ENCODE measurements at regions of chr5 and their contacts with region 1.

Region 1: DNA sequence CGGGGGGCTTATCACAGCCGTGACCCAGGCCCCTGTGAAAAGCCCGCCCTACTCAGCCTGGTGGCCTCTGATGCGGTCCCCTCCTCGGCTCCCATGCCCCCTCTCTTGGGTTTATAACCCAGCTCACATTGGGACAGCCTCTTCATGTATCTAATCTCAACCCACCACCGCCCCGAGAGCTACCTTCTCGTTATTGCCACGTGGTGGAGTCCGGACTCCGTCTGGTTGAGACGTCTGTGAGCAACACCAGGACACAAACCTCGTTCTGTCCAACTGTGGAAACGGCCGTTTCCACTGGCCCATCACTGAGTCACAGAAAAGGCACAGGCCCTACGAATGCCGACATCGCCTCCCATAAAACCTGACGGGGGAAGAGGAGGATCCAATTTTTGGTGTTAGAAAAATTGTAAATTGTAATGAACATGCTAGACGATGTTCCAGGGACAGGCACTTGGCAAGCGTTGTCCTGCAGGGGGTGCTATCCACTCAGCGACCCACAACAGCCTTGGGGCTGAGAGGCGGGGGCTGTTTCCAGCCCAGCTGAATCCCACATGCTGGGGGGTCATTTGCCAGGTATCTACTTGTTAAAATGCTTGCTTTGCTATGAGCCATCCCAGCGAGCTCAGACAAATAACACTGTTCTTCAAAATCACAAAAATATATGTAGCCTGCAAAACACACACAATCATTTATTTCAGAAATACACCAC is 37.3 kb upstream of the N4BP3 start:
- DNase-seq: peak; percentile 61 to 81
- ATAC-seq: peak; percentile 84 to 94 (median 86)
- H3K4me3 ChIP-seq: no peak overlapping the region
- H3K27ac ChIP-seq: no peak overlapping the region
- H3K4me1 ChIP-seq: no peaks in the 10 kb centered on the region
- H3K27me3 ChIP-seq: peaks cover 0 to 26% (median 0%) of the 10 kb centered on the region in 3 donors
- CTCF ChIP-seq: peak; percentile 89

Region 2: GRCh38 chr5:178116143-178116885 is 40.3 kb after region 1 on chr5:
- intact Hi-C with region 1: loop called in 1 of 2 experiments (anchors 5 kb)
- DNase-seq: no peak
- ATAC-seq: no peak
- H3K4me3 ChIP-seq: peak overlapping the region; percentile 64
- H3K27ac ChIP-seq: no peak overlapping the region
- H3K4me1 ChIP-seq: peaks cover 18% of the 10 kb centered on the region
- H3K27me3 ChIP-seq: peaks cover 0 to 53% (median 15%) of the 10 kb centered on the region in 3 donors
- CTCF ChIP-seq: no peak

Region 3: GRCh38 chr5:178146020-178146820 is 70.2 kb after region 1 on chr5:
- intact Hi-C with region 1: loop called in 1 of 2 experiments (anchors 1 kb)
- DNase-seq: peak in 1 of 2 donors; percentile 79
- ATAC-seq: peak; percentile 44 to 64 (median 56)
- H3K4me3 ChIP-seq: no peak overlapping the region
- H3K27ac ChIP-seq: no peak overlapping the region
- H3K4me1 ChIP-seq: peaks cover 20% of the 10 kb centered on the region
- H3K27me3 ChIP-seq: no peaks in the 10 kb centered on the region
- CTCF ChIP-seq: peak; percentile 61

Region 4: DNA sequence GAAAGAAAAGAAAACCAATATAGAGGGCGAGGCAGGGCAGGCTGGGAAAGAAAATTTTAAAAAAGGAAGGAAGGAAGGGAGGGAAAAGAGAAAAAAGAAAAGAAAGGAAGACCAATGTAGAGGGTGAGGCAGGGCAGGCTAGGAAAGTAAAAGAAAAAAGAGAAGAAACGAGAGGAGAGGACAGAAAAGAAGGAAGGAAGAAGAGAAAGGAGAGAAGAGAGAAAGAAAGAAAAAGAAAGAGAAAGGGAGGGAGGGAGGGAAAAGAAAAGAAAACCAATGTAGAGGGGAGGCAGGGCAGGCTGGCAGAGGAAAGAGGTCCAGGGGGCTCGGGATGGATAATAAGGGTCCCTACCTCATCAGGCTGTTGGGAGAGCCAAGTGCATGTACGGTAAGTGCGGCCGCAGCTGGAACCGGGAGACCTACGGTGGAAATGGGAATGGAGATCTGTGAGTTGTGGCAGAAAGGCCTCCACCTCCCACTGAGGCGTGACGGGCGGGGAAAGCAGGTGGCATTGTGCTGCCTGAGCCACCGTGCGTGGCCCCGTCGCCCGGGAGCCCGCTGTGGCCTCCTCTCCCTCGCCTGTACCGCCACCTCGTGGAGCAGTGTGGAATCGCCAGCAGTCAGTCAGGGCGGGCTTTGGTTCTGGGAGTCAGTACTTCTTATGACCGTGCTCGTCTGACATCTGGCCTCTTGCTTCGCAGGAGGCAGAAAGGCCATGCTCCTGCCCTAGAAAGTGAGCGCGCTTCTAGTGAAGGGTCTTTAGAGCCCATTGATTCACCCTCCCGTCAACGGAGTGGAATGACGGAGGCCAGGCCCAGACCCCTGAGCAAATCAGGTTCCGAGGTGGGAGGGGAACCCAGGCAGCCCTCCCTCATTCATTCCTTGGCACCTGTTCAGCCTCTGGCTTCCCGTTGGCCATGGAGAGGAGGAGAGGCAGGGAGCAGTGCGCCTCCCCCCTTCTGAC is 88.1 kb after region 1 on chr5:
- intact Hi-C with region 1: loop called (anchors 1 to 2 kb)
- DNase-seq: peak; percentile 85 to 91
- ATAC-seq: peak; percentile 99 to 100 (median 99)
- H3K4me3 ChIP-seq: peak overlapping the region; percentile 44
- H3K27ac ChIP-seq: no peak overlapping the region
- H3K4me1 ChIP-seq: peaks cover 4% of the 10 kb centered on the region
- H3K27me3 ChIP-seq: peaks cover 0 to 12% (median 6%) of the 10 kb centered on the region in 3 donors
- CTCF ChIP-seq: peak; percentile 99

Region 5: DNA sequence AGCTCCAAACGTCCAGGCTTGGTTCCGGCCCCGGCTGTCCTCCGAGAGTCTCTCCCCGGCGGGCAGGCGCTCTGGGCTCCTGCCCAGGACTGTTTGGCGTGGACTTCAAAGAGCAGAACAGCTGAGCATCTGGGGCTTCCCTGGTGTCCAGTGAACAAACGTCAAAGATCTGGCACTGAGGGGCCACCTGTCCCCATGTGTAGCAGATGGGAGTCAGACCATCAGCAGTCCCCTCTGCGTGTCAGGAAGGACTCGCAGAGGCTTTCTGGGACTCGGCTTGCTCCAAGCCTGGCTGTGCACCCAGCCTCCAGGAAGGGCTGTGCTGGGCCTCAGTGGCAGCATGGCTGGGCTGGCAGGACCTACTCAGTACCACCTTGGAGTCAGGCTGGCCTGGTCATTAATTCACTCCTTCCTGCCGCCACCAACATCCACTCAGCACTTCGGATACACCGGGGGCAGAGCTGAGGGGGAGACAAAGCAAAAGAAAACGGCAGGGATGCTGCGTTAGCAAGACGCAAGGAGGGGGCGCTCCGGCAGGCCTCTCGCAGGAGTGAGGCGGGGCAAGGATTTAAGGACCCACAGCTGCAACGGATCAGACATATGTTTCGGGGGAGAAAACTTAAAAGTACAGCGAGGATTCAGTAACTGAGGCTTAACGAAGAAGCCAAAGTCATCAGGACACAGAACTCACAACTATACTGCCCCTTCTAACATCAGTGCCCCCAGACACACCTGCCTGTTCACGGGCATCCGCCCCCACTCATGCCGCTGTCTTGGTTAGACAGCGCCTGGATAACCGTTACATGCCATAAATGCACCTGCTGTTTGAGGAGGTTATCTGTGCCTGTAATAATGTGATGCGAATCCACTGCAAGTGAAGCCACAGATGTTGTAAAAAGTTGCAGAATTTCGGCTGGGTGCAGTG is 321.1 kb after region 1 on chr5:
- intact Hi-C with region 1: no loop called
- DNase-seq: peak; percentile 76 to 89
- ATAC-seq: peak; percentile 97 to 99 (median 98)
- H3K4me3 ChIP-seq: peak overlapping the region; percentile 22
- H3K27ac ChIP-seq: peak overlapping the region; percentile 74
- H3K4me1 ChIP-seq: peaks cover 4% of the 10 kb centered on the region
- H3K27me3 ChIP-seq: peaks cover 0 to 19% (median 0%) of the 10 kb centered on the region in 3 donors
- CTCF ChIP-seq: no peak

Measured in psoas muscle (tissue), 8 donors.